Common myeloid progenitor, CD34-positive (primary cell): ENCODE measurements at regions of chr13 and their contacts with region 1.

Region 1: GRCh38 chr13:95156208-95156607 is 145.0 kb downstream of the ABCC4 start:
- DNase-seq: peak; percentile 35 to 57 (median 55)
- H3K4me3 ChIP-seq: no peak overlapping the region
- H3K27ac ChIP-seq: no peak overlapping the region
- H3K4me1 ChIP-seq: no peaks in the 10 kb centered on the region
- H3K27me3 ChIP-seq: no peaks in the 10 kb centered on the region

Region 2: DNA sequence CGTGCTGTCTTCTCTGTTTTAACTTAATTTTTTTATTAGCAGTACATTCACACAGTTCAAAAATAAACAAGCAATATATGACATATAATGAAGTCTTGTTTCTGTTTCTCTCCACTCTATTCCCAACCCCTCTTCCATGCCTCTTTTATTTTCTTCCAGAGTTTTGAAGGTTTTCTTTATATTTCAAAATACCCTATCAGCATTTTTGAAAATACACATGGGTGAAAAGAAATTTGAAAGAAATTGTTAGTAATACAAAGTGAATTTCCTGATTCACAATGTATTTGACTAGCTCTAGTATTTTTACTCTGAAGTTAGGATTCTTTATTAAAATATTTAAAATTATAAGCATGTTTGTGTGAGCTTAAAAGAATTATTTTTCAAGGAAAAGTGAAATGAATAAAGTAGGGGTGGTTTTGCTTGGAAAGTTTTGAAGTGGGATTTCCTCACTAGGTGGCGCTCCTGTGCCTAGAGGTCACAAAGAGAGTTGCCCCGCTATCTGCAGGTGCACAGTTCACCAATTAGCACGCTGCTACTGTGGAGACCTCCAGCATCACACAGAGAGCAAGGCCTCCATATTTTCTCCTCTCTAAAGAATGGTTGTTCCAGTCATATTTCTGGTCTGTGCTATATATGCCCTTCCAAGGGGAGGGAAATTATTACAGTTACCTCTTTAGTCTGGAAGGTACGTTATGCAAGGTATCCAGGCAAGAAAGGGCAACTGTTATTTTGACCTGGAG is 481.4 kb before region 1 on chr13:
- CTCF ChIA-PET with region 1: interaction called, 36 read pairs
- POLR2A ChIA-PET with region 1: no interaction called
- DNase-seq: peak; percentile 74 to 79 (median 75)
- H3K4me3 ChIP-seq: no peak overlapping the region
- H3K27ac ChIP-seq: no peak overlapping the region
- H3K4me1 ChIP-seq: no peaks in the 10 kb centered on the region
- H3K27me3 ChIP-seq: peaks cover 0 to 10% (median 7%) of the 10 kb centered on the region in 5 experiments

Region 3: DNA sequence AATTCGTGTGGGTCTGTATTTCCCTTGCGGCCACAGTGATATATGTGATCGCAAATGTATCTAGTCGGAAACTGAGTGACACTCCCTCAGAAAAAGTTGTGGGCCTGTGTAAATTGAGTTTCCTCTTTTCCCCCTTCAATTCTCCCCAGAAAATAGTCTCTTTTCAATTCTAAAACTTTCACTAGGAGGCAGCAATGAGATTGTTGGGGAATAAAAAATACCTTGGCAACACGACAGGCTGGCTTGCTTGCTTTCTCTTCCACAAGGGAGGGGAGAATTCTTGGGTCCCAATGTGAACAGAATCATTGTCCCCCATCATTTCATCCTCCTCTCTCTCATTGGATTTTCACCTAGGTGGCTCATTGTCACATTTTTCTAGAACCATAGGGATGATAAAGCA is 440.2 kb before region 1 on chr13:
- CTCF ChIA-PET with region 1: interaction called, 46 read pairs
- POLR2A ChIA-PET with region 1: no interaction called
- DNase-seq: peak in 2 of 3 donors; percentile 62 to 64
- H3K4me3 ChIP-seq: no peak overlapping the region
- H3K27ac ChIP-seq: no peak overlapping the region
- H3K4me1 ChIP-seq: peaks cover 0 to 23% (median 21%) of the 10 kb centered on the region in 4 experiments
- H3K27me3 ChIP-seq: peaks cover 14 to 60% (median 21%) of the 10 kb centered on the region in 5 experiments

Region 4: GRCh38 chr13:95181586-95181985 is 25.4 kb after region 1 on chr13:
- CTCF ChIA-PET with region 1: interaction called, 11 read pairs
- POLR2A ChIA-PET with region 1: no interaction called
- DNase-seq: no peak
- H3K4me3 ChIP-seq: no peak overlapping the region
- H3K27ac ChIP-seq: no peak overlapping the region
- H3K4me1 ChIP-seq: peaks cover 13 to 43% (median 20%) of the 10 kb centered on the region in 4 experiments
- H3K27me3 ChIP-seq: peaks cover 0 to 2% (median 0%) of the 10 kb centered on the region in 5 experiments